ENCODE measurements at regions of chr1 and their contacts with region 1.

Region 1: DNA sequence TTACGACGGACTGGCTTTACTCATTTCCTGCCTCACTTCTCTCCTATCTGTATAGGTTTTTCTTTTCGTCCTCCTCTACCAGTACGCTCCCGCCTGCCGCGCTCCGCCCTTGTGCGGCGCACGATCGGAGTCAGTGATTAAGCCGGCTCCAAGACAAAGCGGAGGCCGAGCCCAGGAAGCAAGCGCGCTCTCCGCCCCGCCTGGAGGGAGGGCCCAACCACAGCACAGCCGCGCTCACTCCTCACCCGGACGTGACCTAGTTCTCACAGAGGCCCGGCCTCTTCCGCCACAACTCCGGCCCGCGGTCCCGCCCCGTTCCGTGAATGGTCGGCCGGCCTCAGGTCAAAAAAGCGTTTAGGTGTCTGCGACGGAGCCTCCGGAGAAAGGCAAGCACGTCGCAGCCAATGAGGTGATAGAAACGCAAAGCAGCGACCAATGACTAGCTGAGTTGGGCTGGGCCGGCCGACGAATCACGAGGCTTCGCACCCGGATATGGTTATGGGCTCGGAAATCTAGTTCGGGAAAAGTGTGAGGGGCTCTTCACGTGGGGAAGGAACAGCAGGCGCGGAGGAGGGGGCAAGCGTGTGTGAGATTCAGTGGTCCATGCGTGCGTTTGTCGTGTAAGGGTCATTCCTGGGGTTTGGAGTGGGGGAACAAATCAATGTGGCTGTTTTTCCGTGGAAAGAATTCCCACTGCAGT is at the start of gene METTL13:
- DNase-seq: peak; percentile 96 to 100 (median 99)

Region 2: DNA sequence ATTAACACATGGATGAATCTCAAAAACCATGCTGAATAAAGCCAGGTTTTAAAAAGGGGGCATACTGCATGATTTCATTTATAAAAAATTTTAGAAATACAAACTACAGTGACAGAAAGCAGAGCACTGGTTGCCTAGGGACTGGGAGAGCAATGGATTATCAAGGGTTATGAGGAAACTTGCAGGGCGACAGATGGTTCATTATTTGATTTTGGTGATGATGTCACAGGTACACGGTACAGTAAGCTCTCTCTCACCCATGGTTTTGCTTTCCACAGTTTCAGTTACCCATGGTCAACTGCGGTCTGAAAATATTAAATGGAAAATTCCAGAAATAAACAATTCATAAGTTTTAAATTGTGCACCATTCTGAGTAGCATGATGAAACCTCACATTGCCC is 53.5 kb before region 1 on chr1:
- intact Hi-C with region 1: no loop called
- DNase-seq: no peak

Region 3: DNA sequence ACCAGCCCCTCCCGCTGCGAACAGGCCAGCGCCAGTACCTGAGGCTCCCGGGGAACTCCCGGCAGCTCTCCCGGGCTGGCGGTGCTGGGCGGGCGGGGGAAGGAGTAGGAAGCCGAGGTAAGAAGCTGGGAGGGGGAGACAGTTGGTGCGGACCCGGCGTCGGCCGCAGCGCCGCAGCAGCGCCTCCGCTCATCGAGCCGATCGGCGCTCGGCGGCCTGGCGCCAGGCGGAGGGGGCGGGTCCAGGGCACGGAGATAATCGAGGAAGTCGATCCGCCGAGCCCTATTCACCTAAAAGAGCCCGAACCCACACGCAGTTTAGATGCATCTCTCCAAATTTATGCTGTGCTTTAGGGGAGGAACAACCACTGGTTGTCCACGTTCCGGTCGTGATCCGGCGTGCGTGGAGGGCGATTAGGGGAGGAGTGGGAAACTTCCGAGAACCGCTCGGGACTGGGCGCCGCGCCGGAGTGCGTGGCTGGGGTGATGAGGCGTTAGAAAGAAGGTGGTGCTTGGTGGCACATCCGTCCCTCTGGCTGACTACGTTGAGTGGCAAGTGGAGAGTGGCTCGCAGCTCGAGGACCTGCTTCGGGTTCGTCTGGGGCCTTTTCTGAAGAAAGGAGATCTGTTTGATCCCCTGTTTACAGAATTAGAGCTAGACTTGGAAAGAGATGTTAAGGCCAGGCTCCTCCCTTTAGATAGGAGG is 39.3 kb before region 1 on chr1 and contains the start of gene VAMP4:
- intact Hi-C with region 1: loop called (anchors 1 kb)
- DNase-seq: peak; percentile 72 to 96 (median 90)